Activated T-helper 1 cell treated with anti-CD3 and anti-CD28 coated beads, Interleukin-12 subunit alpha, Interleukin-12 subunit beta, Interleukin-2, Interleukin-4 antibody, amounts not matched to agents 30 ng/mL and 10 ng/mL and 1 ng/mL, durations not matched to agents 14 hours and 24 hours and 36 hours (primary cell): ENCODE measurements at regions of chr7 and their contacts with region 1.

Region 1: GRCh38 chr7:112550468-112551060 is 69.8 kb downstream of the LSMEM1 start:
- DNase-seq: peak; percentile 7
- H3K4me3 Mint-ChIP-seq: no peak overlapping the region
- H3K27ac Mint-ChIP-seq: no peak overlapping the region
- H3K4me1 Mint-ChIP-seq: no peaks in the 10 kb centered on the region
- H3K27me3 Mint-ChIP-seq: peaks cover 2% of the 10 kb centered on the region

Region 2: DNA sequence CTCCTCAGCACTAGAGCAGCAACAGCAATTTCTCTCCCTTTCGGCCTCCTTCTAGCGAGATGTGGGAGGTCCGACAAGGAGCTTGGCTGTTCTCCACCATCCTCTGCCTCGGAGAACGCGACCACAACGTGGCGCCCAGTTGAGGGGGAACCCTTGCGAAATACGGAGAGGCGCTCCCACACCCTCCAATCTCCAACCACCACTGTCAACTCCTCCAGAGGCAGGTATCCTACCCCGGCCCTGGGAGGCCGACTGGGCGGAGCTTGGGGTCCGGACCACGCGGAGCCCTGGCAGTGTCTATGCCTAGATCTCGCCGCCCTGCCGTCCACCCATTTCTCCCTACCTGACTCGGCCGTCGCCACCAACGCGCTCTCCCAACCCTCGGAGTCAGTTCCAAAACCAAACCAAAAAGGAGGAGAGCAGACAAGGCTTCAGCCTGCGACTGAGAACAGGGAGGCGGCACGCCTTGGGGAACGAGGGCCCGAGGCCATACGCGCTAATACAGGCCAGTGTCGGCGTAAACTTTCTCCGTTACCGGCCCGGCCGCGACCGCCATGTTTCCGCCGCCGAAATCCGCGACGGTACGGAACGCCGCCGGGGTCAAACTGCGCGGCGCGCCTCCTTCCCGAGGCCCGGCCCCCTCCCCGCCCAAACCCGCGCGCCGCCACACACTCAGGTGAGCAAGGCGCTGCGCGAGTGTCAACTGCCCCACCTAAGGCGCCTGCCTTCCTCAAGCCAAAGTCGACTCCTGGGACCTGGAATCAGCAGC is 239.4 kb after region 1 on chr7 and contains the start of gene TMEM168:
- intact Hi-C with region 1: loop called (anchors 10 kb)
- DNase-seq: peak; percentile 77
- H3K4me3 Mint-ChIP-seq: peak within 1 kb of the TSS; percentile 96
- H3K27ac Mint-ChIP-seq: peak within 1 kb of the TSS; percentile 85
- H3K4me1 Mint-ChIP-seq: peaks cover 41% of the 10 kb centered on the region
- H3K27me3 Mint-ChIP-seq: no peaks in the 10 kb centered on the region
- total RNA-seq, gene TMEM168: 18.1 and 18.2 TPM in 2 replicates

Region 3: GRCh38 chr7:112869111-112869757 is 318.7 kb after region 1 on chr7:
- intact Hi-C with region 1: loop called (anchors 1 kb)
- DNase-seq: peak; percentile 27
- H3K4me3 Mint-ChIP-seq: no peak overlapping the region
- H3K27ac Mint-ChIP-seq: no peak overlapping the region
- H3K4me1 Mint-ChIP-seq: peaks cover 9% of the 10 kb centered on the region
- H3K27me3 Mint-ChIP-seq: no peaks in the 10 kb centered on the region

Region 4: DNA sequence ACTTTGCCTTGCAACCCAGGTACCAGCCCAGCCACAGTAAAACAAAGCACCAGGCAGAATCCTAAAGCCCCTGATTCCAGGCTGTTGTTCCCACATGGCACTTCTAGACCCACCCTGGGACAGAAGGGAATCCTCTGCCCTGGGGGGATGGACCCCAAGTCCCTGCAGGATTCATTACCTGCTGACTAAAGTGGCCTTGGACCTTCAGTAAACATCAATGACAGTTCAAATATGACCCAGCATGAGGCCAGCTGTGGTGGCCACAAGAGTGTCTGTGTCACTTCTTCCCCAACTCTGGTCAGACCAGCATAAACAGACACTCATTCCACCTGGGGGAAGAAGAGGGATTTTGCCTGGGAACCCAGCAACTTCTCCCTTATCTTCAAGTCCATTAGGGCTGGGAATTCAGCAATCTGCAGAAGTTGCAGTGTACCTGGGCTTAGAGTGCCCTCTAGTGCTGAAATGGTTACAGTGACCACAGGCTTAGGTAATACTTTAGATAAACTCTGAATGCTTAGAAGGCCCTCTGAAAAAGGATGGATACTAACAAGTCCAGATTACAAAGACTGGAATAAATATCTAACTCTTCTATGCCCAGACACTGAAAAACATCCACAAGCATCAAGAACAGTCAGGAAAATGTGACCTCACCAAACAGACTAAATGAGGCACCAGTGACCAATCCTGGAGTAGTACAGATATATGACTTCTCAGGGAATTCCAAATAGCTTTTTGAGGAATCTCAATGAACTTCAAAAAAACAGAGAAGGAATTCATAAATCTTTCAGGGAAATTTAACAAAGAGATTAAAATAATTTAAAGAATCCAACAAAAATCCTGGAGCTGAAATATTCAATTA is 348.1 kb after region 1 on chr7:
- intact Hi-C with region 1: loop called (anchors 1 kb)
- DNase-seq: peak; percentile 9
- H3K4me3 Mint-ChIP-seq: no peak overlapping the region
- H3K27ac Mint-ChIP-seq: no peak overlapping the region
- H3K4me1 Mint-ChIP-seq: no peaks in the 10 kb centered on the region
- H3K27me3 Mint-ChIP-seq: no peaks in the 10 kb centered on the region

Region 5: DNA sequence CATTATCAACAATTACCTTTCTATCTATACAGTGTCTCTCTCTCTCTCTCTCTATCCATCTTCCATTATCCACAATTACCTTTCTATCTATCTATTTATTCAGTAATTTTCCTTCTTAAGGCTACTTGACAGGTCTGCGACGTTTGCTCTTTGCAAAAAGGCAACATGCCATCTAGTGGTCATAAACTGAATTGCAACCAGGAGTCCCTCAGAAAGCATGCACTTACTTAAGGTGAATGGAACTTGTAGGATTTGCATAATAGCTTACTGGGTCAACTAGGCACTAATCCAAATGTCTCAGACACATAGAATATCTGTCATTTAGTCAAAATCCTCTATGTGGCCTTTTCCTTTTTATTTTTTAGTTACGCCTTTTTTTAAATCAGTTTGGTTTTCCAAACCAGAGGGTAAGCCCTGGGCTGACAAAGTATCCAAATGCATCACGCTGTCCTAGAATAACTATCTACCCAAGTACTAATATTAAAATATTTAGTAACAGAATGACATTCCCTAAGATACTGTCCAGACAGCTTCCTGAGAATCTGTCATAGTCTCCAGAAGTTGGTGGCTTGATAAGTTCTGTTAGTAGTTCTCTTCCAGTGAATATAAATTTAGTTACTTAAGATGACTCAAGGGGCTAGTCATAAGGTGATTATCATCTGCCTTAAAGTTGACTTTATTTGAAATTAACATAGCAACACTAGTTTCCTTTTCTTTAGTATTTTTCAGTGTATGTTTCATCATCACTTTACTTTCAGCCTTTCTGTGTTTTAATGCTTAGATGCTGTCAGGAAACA is 1159.9 kb after region 1 on chr7:
- intact Hi-C with region 1: loop called (anchors 1 kb)
- DNase-seq: peak; percentile 10
- H3K4me3 Mint-ChIP-seq: no peak overlapping the region
- H3K27ac Mint-ChIP-seq: no peak overlapping the region
- H3K4me1 Mint-ChIP-seq: no peaks in the 10 kb centered on the region
- H3K27me3 Mint-ChIP-seq: peaks cover 2% of the 10 kb centered on the region